GM12878 (cell line): ENCODE measurements at regions of chr19 and their contacts with region 1.

Region 1: DNA sequence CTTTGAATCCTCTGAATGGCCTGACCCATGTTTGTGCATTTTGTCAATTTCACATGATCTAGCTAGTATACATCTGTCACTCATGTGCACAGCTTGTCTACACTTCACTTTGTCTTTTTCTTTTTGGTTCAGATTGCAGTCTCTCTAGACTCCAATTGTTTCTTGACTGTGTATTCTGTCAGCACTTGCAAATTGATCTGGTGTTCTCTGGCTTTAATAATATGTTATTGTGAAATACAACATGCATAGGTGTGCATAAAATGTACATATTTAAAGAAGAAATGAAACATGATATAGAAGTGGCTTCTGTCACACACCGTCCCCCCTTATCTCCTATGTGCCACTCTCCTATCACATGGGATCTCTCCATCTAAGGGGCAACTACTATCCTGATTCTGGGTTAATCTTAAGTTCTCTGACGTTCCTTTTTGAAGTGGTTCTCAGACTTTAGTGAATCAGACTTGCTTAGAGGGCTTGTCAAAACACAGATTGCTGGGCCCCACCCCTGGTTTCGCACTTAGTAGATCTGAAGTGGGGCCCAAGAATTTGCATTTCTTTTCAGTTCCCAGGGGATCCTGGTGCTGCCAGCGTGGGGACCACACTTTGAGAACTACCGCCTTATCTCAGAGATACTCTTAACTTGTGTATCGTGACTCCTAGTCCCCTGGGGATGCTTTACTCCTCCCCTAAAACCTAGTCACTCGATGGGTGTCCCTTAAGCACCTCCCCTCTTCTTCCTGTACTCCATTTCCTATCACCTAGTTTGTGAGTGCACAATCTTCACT is 5.8 kb downstream of the KRTDAP start:
- DNase-seq: peak; percentile 85
- ATAC-seq: peak; percentile 99
- H3K4me3 ChIP-seq: no peak overlapping the region
- H3K27ac ChIP-seq: 0 out of 2 replicates have a peak overlapping the region, but pooled peaks have one; percentile 17
- H3K4me1 ChIP-seq: peaks cover 14% of the 10 kb centered on the region
- H3K27me3 ChIP-seq: no peaks in the 10 kb centered on the region
- CTCF ChIP-seq: no peak
- EP300 ChIP-seq: 0 out of 4 replicates have a peak, but pooled peaks of 1 of the 2 experiments have one; percentile 33
- POLR2A ChIP-seq: no peak
- RAD21 ChIP-seq: no peak

Region 2: DNA sequence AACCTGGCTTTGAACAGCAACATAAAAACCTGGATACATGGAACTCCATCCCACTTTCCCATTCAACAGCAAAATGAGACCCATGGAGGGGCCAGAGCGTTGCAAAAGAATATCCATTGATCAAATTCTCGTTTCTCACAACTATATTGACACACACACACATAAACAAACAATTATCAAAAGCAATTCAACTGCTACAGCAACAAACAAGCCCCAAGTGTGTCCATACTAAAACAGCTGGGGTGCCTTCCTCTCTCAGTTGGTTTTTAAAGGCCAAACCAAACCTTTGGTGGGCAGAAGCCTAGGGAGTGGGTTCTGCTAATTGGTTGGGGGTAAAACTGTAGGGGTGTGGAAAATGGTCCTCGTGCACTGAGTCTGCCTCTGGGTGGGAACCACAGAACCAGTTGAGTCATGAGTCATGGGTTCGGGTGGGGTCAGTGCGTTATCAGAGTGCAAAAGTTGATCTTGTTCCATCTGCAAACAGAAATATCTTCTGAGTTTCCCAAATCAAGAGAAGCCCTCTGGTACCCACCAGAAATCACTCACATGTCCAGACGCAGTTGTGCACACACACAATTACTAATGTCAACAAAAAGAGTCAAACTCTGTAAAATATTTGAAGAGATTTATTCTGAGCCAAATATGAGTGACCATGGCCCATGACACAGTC is 95.1 kb before region 1 on chr19:
- CTCF ChIA-PET with region 1: no interaction called
- POLR2A ChIA-PET with region 1: no interaction called
- RAD21 ChIA-PET with region 1: no interaction called
- SMC1A ChIA-PET with region 1: no interaction called
- in situ Hi-C with region 1: no loop called
- intact Hi-C with region 1: no loop called
- DNase-seq: no peak
- ATAC-seq: no peak
- H3K4me3 ChIP-seq: no peak overlapping the region
- H3K27ac ChIP-seq: no peak overlapping the region
- H3K4me1 ChIP-seq: no peaks in the 10 kb centered on the region
- H3K27me3 ChIP-seq: no peaks in the 10 kb centered on the region
- CTCF ChIP-seq: no peak
- EP300 ChIP-seq: no peak
- POLR2A ChIP-seq: no peak
- RAD21 ChIP-seq: no peak

Region 3: DNA sequence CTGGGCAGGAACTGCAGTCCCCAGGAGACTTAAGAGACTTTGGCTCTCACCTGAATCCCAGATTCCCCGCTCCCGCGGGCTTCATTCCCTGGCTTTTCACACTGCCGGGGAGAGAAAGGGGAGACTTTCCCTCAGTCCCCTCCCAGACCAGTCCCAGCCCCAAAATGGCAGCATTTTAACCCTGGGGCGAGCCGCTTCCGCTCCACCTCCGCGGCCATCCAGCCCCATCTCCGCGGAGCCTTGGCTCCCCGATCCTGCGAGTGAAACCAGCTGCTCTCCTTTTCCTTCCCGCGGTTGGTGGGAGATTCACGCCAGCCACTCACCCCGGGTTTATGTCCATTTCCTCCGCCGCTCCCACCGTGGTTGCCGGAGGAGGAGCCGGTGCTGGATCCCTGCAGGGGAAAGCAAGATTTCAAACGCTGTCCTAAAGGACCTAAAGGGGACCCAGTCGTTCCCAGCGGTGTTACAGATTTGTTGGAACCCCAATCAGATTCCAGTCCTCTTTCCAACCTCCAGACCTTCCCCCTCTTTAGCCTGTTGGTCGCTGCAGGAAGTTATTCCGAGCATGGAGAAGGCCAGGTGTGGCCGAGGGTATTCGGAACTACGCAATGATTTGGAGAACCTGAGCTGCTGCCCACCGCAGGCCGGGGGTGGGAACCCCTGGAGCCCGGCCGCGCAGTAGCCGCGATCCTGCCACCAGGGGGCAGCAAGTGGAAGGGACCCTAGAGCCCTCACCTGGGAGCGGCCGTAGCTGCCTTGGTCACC is 25.6 kb after region 1 on chr19:
- CTCF ChIA-PET with region 1: interaction called, 8 read pairs
- POLR2A ChIA-PET with region 1: interaction called, 5 read pairs
- RAD21 ChIA-PET with region 1: interaction called, 3 read pairs
- SMC1A ChIA-PET with region 1: interaction called, 14 read pairs
- in situ Hi-C with region 1: no loop called
- intact Hi-C with region 1: no loop called
- DNase-seq: no peak
- ATAC-seq: peak; percentile 88
- H3K4me3 ChIP-seq: peak overlapping the region; percentile 74
- H3K27ac ChIP-seq: peak overlapping the region; percentile 52
- H3K4me1 ChIP-seq: peaks cover 8% of the 10 kb centered on the region
- H3K27me3 ChIP-seq: no peaks in the 10 kb centered on the region; a peak in 1 of 4 replicates
- CTCF ChIP-seq: peak; percentile 96; a peak in 5 of 6 replicates
- EP300 ChIP-seq: no peak
- POLR2A ChIP-seq: no peak; the same call in 1 of the 2 replicates
- RAD21 ChIP-seq: peak; percentile 71

Region 4: DNA sequence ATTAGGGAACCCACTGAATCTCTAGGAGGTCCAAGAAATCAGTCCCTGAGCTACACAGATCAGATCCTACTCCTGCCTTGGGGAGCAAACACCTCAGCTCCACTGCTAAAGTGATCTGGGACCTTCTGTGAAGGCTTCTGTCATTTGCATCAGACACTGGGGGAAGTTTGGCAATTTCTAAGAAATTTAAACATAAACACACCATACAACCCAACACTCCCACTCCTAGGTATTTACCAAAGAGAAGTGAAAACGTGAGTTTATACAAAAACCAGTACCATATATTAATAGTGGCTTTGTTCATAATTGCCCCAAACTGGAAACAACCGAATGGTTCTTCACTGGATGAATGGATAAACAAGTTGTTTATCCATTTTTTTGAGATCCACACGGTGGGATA is 431.0 kb after region 1 on chr19:
- CTCF ChIA-PET with region 1: no interaction called
- POLR2A ChIA-PET with region 1: no interaction called
- RAD21 ChIA-PET with region 1: no interaction called
- SMC1A ChIA-PET with region 1: no interaction called
- in situ Hi-C with region 1: no loop called
- intact Hi-C with region 1: no loop called
- DNase-seq: no peak
- ATAC-seq: peak; percentile 67
- H3K4me3 ChIP-seq: no peak overlapping the region
- H3K27ac ChIP-seq: no peak overlapping the region; the same call in 1 of the 2 replicates
- H3K4me1 ChIP-seq: peaks cover 45% of the 10 kb centered on the region
- H3K27me3 ChIP-seq: no peaks in the 10 kb centered on the region
- CTCF ChIP-seq: no peak
- EP300 ChIP-seq: no peak; a peak in 1 of 4 replicates
- POLR2A ChIP-seq: no peak
- RAD21 ChIP-seq: no peak